Panc1 (cell line): ENCODE measurements at regions of chr15 and their contacts with region 1.

Region 1: GRCh38 chr15:31526916-31527690 is 200.5 kb downstream of the KLF13 start:
- DNase-seq: no peak
- ATAC-seq: no peak
- H3K4me3 ChIP-seq: no peak overlapping the region
- H3K27ac ChIP-seq: no peak overlapping the region
- H3K4me1 ChIP-seq: no peaks in the 10 kb centered on the region
- H3K27me3 ChIP-seq: no peaks in the 10 kb centered on the region; the same call in 1 of the 2 replicates
- CTCF ChIP-seq: no peak

Region 2: GRCh38 chr15:31452595-31453185 is 74.4 kb before region 1 on chr15:
- CTCF ChIA-PET with region 1: no interaction called
- POLR2A ChIA-PET with region 1: no interaction called
- in situ Hi-C with region 1: no loop called
- intact Hi-C with region 1: no loop called
- DNase-seq: no peak
- ATAC-seq: no peak
- H3K4me3 ChIP-seq: no peak overlapping the region
- H3K27ac ChIP-seq: no peak overlapping the region
- H3K4me1 ChIP-seq: no peaks in the 10 kb centered on the region
- H3K27me3 ChIP-seq: no peaks in the 10 kb centered on the region
- CTCF ChIP-seq: no peak

Region 3: GRCh38 chr15:31598620-31599019 is 71.5 kb after region 1 on chr15:
- CTCF ChIA-PET with region 1: no interaction called
- POLR2A ChIA-PET with region 1: no interaction called
- in situ Hi-C with region 1: no loop called
- intact Hi-C with region 1: loop called (anchors 10 kb)
- DNase-seq: no peak
- ATAC-seq: no peak
- H3K4me3 ChIP-seq: no peak overlapping the region
- H3K27ac ChIP-seq: no peak overlapping the region
- H3K4me1 ChIP-seq: no peaks in the 10 kb centered on the region
- H3K27me3 ChIP-seq: no peaks in the 10 kb centered on the region
- CTCF ChIP-seq: no peak